Heart left ventricle (tissue), 16 donors: ENCODE measurements at regions of chr7 and their contacts with region 1.

Region 1: DNA sequence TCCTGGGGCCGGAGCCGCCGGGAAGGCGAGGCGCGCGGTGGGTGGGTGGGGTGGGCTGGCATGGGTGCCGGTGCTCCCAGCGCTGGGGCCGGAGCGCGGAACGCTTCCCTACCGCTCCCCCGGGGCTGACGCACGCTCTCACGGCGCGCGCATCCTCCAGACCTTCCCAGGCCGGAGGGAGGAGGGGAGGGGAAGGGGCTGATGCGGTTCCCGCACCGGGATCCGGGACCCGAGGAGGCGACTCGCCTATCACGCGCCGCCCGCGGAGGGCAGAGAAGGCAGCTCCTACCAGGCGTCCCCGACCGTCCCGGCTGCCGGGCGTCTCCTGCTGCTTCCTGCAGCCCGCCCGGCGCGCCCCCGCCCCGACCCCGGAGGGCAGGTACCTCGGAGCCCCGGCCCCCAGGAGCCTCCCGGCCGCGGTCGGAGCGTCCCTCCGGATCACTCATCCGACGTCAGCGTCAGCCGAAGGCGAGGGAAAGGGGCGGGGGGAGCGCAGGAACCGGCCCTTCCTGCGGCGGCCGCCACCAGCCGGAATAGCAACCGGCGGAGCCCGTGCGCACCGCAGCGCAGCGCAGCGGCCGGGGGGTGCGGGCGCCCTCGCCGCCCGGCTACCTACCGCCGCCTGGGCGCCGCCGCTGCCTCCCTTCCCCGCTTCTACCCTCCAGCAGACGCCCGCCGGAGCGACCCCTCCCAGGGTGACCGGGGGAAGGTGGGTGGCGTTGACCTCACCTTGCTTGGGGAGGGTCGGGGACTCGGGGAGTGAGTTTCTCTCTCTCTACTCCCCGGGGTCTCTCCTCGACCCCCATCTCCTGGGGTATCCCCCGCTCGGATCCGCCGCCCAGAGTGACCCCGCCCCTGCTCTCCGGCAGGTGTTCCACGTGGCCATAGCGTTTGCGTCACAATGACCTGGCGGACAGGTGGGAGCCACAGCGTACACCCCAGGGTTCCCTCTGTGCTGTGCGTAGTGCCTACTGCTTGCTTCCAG is at the start of gene ICA1:
- DNase-seq: peak; percentile 83 to 89 (median 85)
- ATAC-seq: peak; percentile 63 to 94 (median 90)
- H3K4me3 ChIP-seq: peak within 1 kb of the TSS; percentile 72 to 99 (median 86)
- H3K27ac ChIP-seq: peak within 1 kb of the TSS; percentile 87 to 99 (median 96)
- H3K4me1 ChIP-seq: peaks cover 0 to 23% (median 4%) of the 10 kb centered on the region in 12 donors
- H3K27me3 ChIP-seq: peaks cover 0 to 14% (median 0%) of the 10 kb centered on the region in 9 donors
- CTCF ChIP-seq: peak in 3 of 12 donors; percentile 5 to 21 (median 13)
- POLR2A ChIP-seq: peak in 1 of 2 donors; percentile 76
- total RNA-seq, gene ICA1: 37.5 to 74.4 (median 58.7) TPM

Region 2: GRCh38 chr7:8284606-8285005 is 22.6 kb after region 1 on chr7:
- intact Hi-C with region 1: loop called in 1 of 10 experiments (anchors 1 kb)
- DNase-seq: peak in 1 of 5 donors; percentile 14
- ATAC-seq: peak in 1 of 4 donors; percentile 9
- H3K4me3 ChIP-seq: no peak overlapping the region
- H3K27ac ChIP-seq: peak overlapping the region; percentile 1 to 90 (median 82)
- H3K4me1 ChIP-seq: peaks cover 0 to 33% (median 8%) of the 10 kb centered on the region in 12 donors
- H3K27me3 ChIP-seq: no peaks in the 10 kb centered on the region
- CTCF ChIP-seq: no peak
- POLR2A ChIP-seq: no peak

Region 3: DNA sequence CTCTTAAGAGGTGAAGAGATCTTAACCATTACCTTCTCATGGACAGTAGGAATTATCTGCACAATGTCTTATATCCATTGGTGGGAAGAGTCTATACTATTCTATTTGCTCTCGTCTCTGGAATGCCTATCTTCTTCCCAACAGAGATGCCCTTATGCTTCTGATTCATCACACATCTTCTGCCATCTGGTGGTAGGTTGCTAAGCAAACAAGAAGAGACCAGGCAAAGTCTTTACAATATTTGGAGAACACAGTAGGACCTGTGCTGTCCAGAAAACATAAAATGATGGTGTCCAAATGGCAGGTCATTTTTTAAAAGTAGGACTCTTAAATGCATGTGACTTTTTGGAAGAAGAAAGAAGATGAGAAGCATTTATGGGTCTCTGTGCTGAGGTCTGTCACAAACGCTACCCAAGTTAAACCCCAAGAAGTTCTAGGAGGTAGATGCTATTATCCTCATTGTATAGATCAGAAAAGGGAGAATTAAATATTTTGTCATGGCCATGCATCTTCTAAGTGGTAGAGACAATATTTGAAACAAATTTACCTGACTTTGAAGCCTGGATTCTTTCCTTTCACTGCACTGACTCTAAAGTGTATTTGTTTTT is 103.6 kb after region 1 on chr7:
- intact Hi-C with region 1: no loop called
- DNase-seq: no peak
- ATAC-seq: no peak
- H3K4me3 ChIP-seq: no peak overlapping the region
- H3K27ac ChIP-seq: no peak overlapping the region
- H3K4me1 ChIP-seq: no peaks in the 10 kb centered on the region
- H3K27me3 ChIP-seq: no peaks in the 10 kb centered on the region
- CTCF ChIP-seq: peak in 9 of 12 donors; percentile 7 to 46 (median 26)
- POLR2A ChIP-seq: no peak